ENCODE measurements at regions of chr1 and their contacts with region 1.

Region 1: GRCh38 chr1:67535474-67535873 is 105.3 kb upstream of the SERBP1 start:
- DNase-seq: peak; percentile 67
- H3K4me3 ChIP-seq: no peak overlapping the region
- H3K27ac ChIP-seq: no peak overlapping the region
- H3K4me1 ChIP-seq: no peaks in the 10 kb centered on the region
- H3K27me3 ChIP-seq: no peaks in the 10 kb centered on the region
- CTCF ChIP-seq: peak; percentile 69 to 96 (median 87)
- POLR2A ChIP-seq: no peak

Region 2: GRCh38 chr1:67561704-67562113 is 26.2 kb after region 1 on chr1:
- intact Hi-C with region 1: no loop called
- DNase-seq: peak; percentile 92
- H3K4me3 ChIP-seq: no peak overlapping the region
- H3K27ac ChIP-seq: peak overlapping the region in 1 of 2 donors; percentile 24
- H3K4me1 ChIP-seq: no peaks in the 10 kb centered on the region
- H3K27me3 ChIP-seq: no peaks in the 10 kb centered on the region
- CTCF ChIP-seq: peak; percentile 56 to 87 (median 82)
- POLR2A ChIP-seq: no peak

Region 3: GRCh38 chr1:67760030-67760821 is 224.8 kb after region 1 on chr1:
- intact Hi-C with region 1: loop called (anchors 2 kb)
- DNase-seq: peak; percentile 73
- H3K4me3 ChIP-seq: no peak overlapping the region
- H3K27ac ChIP-seq: peak overlapping the region; percentile 7 to 60
- H3K4me1 ChIP-seq: peaks cover 6% of the 10 kb centered on the region
- H3K27me3 ChIP-seq: no peaks in the 10 kb centered on the region
- CTCF ChIP-seq: peak; percentile 80 to 95 (median 88)
- POLR2A ChIP-seq: no peak

Region 4: DNA sequence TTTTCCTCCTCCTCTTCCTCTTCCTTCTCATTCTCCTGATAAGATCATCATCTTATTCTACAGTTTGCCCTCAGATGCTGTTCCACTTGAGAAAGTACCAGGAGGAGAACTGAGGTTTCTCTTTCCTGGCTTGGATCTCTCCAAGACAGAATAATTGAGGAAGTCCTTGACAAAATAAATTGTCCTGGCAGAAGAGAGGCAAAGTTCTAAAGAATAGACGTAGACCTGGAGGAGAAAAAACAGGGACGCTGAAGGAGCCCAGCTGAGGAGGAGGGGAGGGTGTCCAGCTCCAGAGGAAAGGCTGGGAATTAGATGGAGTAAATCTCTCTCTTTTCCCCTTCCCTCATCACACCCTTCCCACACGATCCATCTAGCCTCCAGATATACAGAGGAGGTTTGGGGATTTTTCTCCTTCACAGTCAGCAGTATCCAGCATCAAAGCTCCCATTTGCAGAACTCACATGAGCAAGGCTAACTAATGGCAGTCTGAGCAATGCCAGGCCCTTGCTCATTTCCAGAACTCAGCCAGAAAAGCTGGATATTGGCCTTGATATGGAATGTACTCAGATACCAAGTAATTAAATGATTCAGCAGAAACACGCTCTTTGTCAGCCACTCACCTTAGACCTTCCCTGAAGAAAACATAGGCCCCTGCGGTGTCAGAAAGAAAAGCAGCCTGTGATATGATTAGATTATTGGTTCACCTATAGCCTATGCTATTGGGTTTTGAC is 302.9 kb after region 1 on chr1:
- intact Hi-C with region 1: loop called (anchors 5 kb)
- DNase-seq: no peak
- H3K4me3 ChIP-seq: no peak overlapping the region
- H3K27ac ChIP-seq: no peak overlapping the region
- H3K4me1 ChIP-seq: no peaks in the 10 kb centered on the region
- H3K27me3 ChIP-seq: no peaks in the 10 kb centered on the region
- CTCF ChIP-seq: no peak
- POLR2A ChIP-seq: no peak

Region 5: GRCh38 chr1:68111519-68112436 is 576.3 kb after region 1 on chr1:
- intact Hi-C with region 1: loop called (anchors 2 kb)
- DNase-seq: peak; percentile 32
- H3K4me3 ChIP-seq: no peak overlapping the region
- H3K27ac ChIP-seq: no peak overlapping the region
- H3K4me1 ChIP-seq: no peaks in the 10 kb centered on the region
- H3K27me3 ChIP-seq: no peaks in the 10 kb centered on the region
- CTCF ChIP-seq: peak in 3 of 4 experiments; percentile 32 to 66 (median 50)
- POLR2A ChIP-seq: no peak